Sigmoid colon (tissue), 7 donors: ENCODE measurements at regions of chr22 and their contacts with region 1.

Region 1: DNA sequence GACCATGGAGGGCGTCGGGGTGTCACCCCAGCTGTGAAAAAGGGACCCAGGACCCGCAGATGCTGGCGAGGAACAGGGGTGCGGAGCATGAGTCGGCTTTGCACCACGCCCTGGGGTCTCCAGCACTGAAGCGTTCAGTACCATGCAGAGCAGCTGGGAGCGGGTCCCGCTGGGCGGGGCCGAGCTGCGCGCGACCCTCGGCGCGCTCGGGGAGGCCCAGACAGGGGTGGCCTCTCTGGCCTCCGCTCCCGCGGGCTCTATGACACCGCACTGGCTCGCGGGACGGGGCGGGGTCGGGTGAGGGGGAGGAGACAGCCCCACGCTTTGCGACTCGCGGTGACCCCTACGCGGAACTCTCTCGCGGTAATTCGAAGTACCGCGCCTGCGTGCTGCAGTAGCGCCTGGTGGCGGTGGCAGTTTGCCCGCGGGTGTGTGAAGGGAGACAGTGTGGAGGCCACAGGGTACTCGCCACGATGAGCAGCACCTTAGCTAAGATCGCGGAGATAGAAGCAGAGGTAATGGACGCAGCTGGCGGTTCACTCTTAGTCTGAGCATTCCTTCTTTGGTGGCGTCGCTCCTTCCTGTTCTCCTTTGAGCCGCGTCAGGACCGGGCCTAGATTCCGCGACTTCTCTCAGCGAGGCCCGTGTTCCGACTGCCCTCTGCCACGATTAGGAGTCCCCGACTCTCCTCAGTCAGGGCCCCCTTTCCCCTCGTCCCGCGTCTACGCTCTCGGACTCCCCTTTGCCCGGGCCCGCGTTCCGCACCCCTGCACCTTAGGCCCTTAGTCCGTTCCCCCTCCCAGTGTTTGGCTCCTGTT is at the start of gene DRG1:
- DNase-seq: peak; percentile 99
- H3K4me3 ChIP-seq: peak within 1 kb of the TSS; percentile 69 to 81 (median 78)
- H3K27ac ChIP-seq: peak within 1 kb of the TSS; percentile 82 to 87 (median 84)
- H3K4me1 ChIP-seq: peaks cover 0 to 25% (median 16%) of the 10 kb centered on the region in 4 donors
- H3K27me3 ChIP-seq: no peaks in the 10 kb centered on the region
- CTCF ChIP-seq: peak in 1 of 4 experiments; percentile 37
- EP300 ChIP-seq: no peak
- POLR2A ChIP-seq: peak; percentile 93 to 96
- total RNA-seq, gene DRG1: 52.9 to 95.1 (median 71.9) TPM

Region 2: GRCh38 chr22:31345331-31346254 is 53.8 kb before region 1 on chr22:
- intact Hi-C with region 1: loop called (anchors 1 kb)
- DNase-seq: peak; percentile 90
- H3K4me3 ChIP-seq: peak overlapping the region; percentile 60 to 79 (median 66)
- H3K27ac ChIP-seq: peak overlapping the region; percentile 88 to 93 (median 90)
- H3K4me1 ChIP-seq: peaks cover 0 to 59% (median 41%) of the 10 kb centered on the region in 4 donors
- H3K27me3 ChIP-seq: no peaks in the 10 kb centered on the region
- CTCF ChIP-seq: peak; percentile 70 to 90 (median 82)
- EP300 ChIP-seq: no peak
- POLR2A ChIP-seq: no peak

Region 3: GRCh38 chr22:31695423-31695822 is 296.0 kb after region 1 on chr22:
- intact Hi-C with region 1: no loop called
- DNase-seq: no peak
- H3K4me3 ChIP-seq: no peak overlapping the region
- H3K27ac ChIP-seq: no peak overlapping the region
- H3K4me1 ChIP-seq: no peaks in the 10 kb centered on the region
- H3K27me3 ChIP-seq: no peaks in the 10 kb centered on the region
- CTCF ChIP-seq: no peak
- EP300 ChIP-seq: no peak
- POLR2A ChIP-seq: no peak